Psoas muscle (tissue), 8 donors: ENCODE measurements at regions of chr11 and their contacts with region 1.

Region 1: DNA sequence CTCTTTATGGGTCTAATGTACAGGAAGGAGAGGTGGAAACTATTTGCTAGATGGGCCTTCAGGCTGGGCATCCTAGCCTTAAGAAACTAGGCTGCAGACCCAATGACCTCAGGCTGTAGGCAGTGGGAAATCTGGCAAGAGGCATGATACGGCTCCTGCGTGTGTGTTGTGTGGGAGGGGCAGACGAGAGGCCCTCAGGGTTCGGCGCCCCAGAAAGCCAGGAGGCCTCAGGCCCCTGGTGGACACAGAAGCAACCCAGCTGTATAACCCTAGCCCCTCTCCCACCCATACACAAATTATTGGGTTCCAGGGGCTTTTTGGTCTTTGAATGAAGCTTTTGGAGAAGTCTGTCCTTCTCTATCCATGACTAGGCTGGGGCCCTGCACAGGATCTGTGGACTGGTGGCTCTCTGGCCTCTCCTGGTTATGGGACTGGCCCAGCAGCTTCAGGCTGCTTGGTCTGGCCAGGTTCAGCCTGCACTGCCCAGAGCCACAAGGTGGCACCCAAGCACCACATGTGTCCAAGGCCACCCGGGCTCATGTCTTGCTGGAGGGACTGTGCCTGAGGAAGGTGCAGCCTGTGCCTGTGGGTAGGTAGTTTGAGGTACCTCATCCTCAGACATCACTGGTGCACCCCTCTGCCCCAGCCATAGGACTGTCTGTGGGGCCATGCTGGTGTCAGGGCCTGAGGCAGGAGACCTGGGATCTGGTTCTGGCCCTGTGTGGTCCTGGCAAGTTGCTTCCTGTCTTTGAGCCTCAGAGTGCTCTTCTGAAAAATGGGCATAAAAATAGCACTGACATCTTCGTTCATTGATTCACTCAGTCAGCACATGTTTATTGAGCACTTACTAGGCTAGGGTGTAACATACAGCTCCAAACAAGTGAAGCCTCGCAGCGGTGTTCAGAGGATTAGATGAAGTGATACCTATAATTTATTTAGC is 87.5 kb downstream of the RRM1 start:
- DNase-seq: no peak
- ATAC-seq: peak; percentile 64 to 80 (median 68)
- H3K4me3 ChIP-seq: no peak overlapping the region
- H3K27ac ChIP-seq: no peak overlapping the region
- H3K4me1 ChIP-seq: no peaks in the 10 kb centered on the region
- H3K27me3 ChIP-seq: no peaks in the 10 kb centered on the region
- CTCF ChIP-seq: peak; percentile 57

Region 2: GRCh38 chr11:3914805-3915204 is 267.2 kb before region 1 on chr11:
- intact Hi-C with region 1: no loop called
- DNase-seq: no peak
- ATAC-seq: no peak
- H3K4me3 ChIP-seq: no peak overlapping the region
- H3K27ac ChIP-seq: no peak overlapping the region
- H3K4me1 ChIP-seq: peaks cover 23% of the 10 kb centered on the region
- H3K27me3 ChIP-seq: no peaks in the 10 kb centered on the region
- CTCF ChIP-seq: no peak

Region 3: GRCh38 chr11:4049006-4049405 is 133.0 kb before region 1 on chr11:
- intact Hi-C with region 1: no loop called
- DNase-seq: no peak
- ATAC-seq: no peak
- H3K4me3 ChIP-seq: no peak overlapping the region
- H3K27ac ChIP-seq: no peak overlapping the region
- H3K4me1 ChIP-seq: peaks cover 26% of the 10 kb centered on the region
- H3K27me3 ChIP-seq: no peaks in the 10 kb centered on the region
- CTCF ChIP-seq: no peak

Region 4: DNA sequence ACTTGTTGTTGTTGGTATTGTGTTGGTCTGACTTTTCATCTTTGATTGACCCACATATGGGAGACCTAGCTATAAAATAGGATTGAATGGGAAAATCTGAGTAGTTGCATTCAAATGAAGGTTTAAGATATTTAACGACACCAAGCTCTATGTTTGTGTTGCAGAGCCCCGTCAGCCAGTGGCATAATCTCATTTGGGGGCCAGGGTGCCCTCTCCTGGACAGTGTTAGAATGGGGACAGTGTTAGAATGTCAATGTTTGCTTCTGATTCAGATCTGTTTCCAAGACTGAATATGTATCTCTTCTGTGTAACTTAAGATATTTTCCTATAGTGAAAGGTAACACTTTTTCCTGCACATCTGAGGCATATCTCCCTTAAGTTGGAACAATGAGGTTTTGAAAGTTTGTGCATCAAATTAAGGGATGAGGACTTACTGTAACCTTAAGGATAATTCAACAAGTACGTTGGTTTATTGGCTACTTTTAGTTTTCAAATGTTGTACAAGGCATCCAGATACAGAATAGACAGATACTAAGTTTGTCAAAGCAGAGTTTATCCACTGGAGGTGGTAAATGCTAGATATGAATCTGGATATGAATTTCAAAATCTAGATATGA is 357.7 kb after region 1 on chr11:
- intact Hi-C with region 1: loop called (anchors 1 to 2 kb)
- DNase-seq: peak; percentile 20 to 62
- ATAC-seq: peak; percentile 54 to 72 (median 65)
- H3K4me3 ChIP-seq: no peak overlapping the region
- H3K27ac ChIP-seq: no peak overlapping the region
- H3K4me1 ChIP-seq: no peaks in the 10 kb centered on the region
- H3K27me3 ChIP-seq: no peaks in the 10 kb centered on the region
- CTCF ChIP-seq: peak; percentile 76